Activated CD4-positive, alpha-beta memory T cell treated with anti-CD3 and anti-CD28 coated beads, Interleukin-2, amount 10 ng/mL, durations not matched to agents 7 days and 5 days (primary cell): ENCODE measurements at regions of chr4 and their contacts with region 1.

Region 1: GRCh38 chr4:6986781-6987587 is 56.2 kb upstream of the TADA2B start:
- DNase-seq: peak; percentile 95
- H3K4me3 Mint-ChIP-seq: peak overlapping the region; percentile 98
- H3K27ac Mint-ChIP-seq: peak overlapping the region; percentile 95
- H3K4me1 Mint-ChIP-seq: peaks cover 81% of the 10 kb centered on the region
- H3K27me3 Mint-ChIP-seq: no peaks in the 10 kb centered on the region

Region 2: GRCh38 chr4:7007944-7008343 is 21.0 kb after region 1 on chr4:
- CTCF ChIA-PET with region 1: interaction called, 3 read pairs
- POLR2A ChIA-PET with region 1: interaction called, 13 read pairs
- DNase-seq: no peak
- H3K4me3 Mint-ChIP-seq: no peak overlapping the region
- H3K27ac Mint-ChIP-seq: peak overlapping the region; percentile 16
- H3K4me1 Mint-ChIP-seq: peaks cover 23% of the 10 kb centered on the region
- H3K27me3 Mint-ChIP-seq: no peaks in the 10 kb centered on the region